ENCODE measurements at regions of chr6 and their contacts with region 1.

Region 1: GRCh38 chr6:43454696-43455530 is 435 bp downstream of the DLK2 start:
- DNase-seq: peak; percentile 83 to 89 (median 85)
- ATAC-seq: peak; percentile 92
- H3K4me3 ChIP-seq: peak overlapping the region; percentile 38 to 39
- H3K27ac ChIP-seq: no peak overlapping the region
- H3K4me1 ChIP-seq: peaks cover 18% of the 10 kb centered on the region
- H3K27me3 ChIP-seq: peaks cover 0 to 5% of the 10 kb centered on the region in 2 donors
- CTCF ChIP-seq: peak in 1 of 7 experiments; percentile 26
- POLR2A ChIP-seq: no peak

Region 2: DNA sequence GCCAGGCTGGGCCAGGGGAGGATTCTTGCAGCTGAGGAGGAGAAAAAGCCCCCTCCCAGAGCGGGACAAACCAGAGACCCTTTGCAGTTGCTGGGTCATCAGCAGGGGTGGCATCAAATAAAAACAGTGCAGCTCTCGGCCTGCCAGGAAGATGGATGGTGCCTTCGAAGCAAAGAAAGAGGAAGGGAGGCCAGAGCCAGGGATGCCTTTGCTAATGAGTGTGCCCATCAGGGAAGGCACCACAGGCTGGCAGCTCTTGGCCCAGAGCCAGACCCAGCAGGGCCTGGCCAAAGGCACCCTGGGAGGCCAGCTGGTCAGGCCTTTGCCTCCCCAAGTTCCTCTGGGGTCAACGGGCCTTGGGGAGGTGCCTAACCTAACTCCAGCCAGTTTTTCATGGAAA is 59.1 kb before region 1 on chr6:
- intact Hi-C with region 1: no loop called
- DNase-seq: peak in 3 of 4 donors; percentile 15 to 42 (median 35)
- ATAC-seq: peak; percentile 39
- H3K4me3 ChIP-seq: no peak overlapping the region
- H3K27ac ChIP-seq: peak overlapping the region in 1 of 4 donors; percentile 39
- H3K4me1 ChIP-seq: peaks cover 10% of the 10 kb centered on the region
- H3K27me3 ChIP-seq: no peaks in the 10 kb centered on the region
- CTCF ChIP-seq: no peak
- POLR2A ChIP-seq: no peak

Region 3: DNA sequence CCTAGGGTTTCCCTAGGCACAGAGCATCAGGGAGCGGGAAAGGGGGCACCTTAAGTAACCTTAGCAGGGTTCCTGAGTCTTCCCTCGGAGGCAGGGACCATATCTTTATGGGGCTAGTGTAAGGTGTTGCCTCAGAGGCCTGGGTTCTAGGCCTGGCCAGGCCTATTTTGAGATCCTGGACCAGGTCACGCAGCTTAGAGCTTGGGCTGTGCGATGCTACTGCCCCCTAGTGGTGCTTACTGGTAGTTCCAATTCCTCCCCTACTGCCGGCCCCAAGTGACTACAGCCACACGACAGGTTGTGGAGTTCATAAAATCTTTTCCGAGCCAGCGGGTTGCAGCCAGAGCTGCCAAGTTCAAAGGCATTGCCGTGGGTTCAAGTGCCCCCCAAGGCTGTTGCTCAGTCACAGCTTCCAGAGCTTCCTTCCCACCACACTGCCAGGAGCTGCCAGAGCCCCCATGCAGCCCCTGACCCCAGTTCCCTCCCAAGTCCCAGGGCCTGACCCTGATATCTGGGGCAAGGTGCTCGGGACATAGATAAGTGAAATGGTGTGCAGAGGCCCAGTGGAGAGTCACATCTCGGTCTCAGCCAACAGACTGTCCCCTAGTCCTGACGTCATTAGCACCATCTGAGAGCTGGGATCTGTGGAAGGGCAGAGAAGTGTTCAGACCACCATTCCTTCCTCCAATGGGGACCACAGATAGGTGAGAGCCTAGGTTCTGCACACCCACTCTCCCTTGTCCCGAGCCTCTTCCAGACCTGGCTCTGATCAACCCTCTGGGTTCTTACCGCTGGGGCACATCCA is 52.0 kb after region 1 on chr6:
- intact Hi-C with region 1: loop called (anchors 5 kb)
- DNase-seq: peak; percentile 80 to 86 (median 82)
- ATAC-seq: peak; percentile 66
- H3K4me3 ChIP-seq: no peak overlapping the region
- H3K27ac ChIP-seq: no peak overlapping the region
- H3K4me1 ChIP-seq: peaks cover 23% of the 10 kb centered on the region
- H3K27me3 ChIP-seq: no peaks in the 10 kb centered on the region
- CTCF ChIP-seq: peak; percentile 93 to 97 (median 94)
- POLR2A ChIP-seq: no peak